Prostate gland (tissue), 2 donors: ENCODE measurements at regions of chrX and their contacts with region 1.

Region 1: DNA sequence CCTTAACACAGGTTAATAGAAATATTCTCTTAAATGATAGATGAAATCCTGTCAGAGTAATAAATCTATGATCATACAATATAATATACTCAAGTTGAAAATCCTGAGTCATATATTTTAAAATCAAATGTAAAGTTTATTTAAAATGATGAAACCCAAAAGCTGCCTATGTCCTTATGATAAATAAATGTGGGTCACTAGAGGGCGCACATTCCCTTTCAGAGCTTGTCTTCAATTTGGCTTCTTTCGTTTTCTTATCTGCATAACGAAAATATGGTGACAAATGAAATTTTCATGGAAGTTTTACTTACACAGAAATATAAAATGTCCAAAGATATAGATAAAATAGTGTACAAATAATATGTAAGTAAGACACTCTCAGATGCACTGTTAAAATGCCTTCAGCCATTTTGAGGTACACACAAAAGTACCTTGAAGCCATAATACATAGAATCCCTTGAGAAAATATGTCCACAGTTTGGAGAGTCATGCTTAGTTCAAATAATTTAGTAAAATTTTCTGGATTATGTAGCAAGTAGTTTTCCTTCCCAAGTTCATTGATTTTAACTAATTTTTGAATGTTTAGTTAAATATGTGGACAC is 680.4 kb downstream of the DMD start:
- DNase-seq: peak; percentile 7
- H3K4me3 ChIP-seq: no peak overlapping the region
- H3K27ac ChIP-seq: no peak overlapping the region
- H3K4me1 ChIP-seq: no peaks in the 10 kb centered on the region
- H3K27me3 ChIP-seq: no peaks in the 10 kb centered on the region
- CTCF ChIP-seq: peak in 3 of 4 experiments; percentile 29 to 54 (median 40)
- POLR2A ChIP-seq: no peak

Region 2: DNA sequence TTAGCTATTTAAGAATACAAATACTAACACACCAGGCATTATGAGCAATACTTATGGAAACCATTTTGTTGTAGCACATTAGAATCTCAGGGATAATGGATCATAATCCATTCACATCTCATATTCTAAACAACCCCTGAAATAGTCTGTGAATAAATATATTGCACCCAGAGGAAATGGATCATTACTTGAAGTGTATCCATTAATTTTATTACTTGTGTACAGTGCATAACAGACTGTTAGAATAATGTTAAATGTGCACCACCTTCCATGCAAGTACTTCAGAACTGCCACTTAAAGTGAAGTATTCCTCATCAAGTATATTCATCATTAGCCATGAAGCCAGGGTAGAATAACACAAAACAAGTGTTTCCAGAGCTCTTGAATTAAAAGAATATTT is 35.0 kb before region 1 on chrX:
- intact Hi-C with region 1: no loop called
- DNase-seq: no peak
- H3K4me3 ChIP-seq: no peak overlapping the region
- H3K27ac ChIP-seq: no peak overlapping the region
- H3K4me1 ChIP-seq: no peaks in the 10 kb centered on the region
- H3K27me3 ChIP-seq: no peaks in the 10 kb centered on the region
- CTCF ChIP-seq: no peak
- POLR2A ChIP-seq: no peak

Region 3: GRCh38 chrX:33336783-33337182 is 805.9 kb after region 1 on chrX:
- intact Hi-C with region 1: loop called (anchors 10 kb)
- DNase-seq: peak; percentile 5
- H3K4me3 ChIP-seq: no peak overlapping the region
- H3K27ac ChIP-seq: no peak overlapping the region
- H3K4me1 ChIP-seq: no peaks in the 10 kb centered on the region
- H3K27me3 ChIP-seq: no peaks in the 10 kb centered on the region
- CTCF ChIP-seq: peak in 2 of 4 experiments; percentile 11 to 33
- POLR2A ChIP-seq: no peak